Right ventricle myocardium inferior (tissue), 1 donor: ENCODE measurements at regions of chr13 and their contacts with region 1.

Region 1: DNA sequence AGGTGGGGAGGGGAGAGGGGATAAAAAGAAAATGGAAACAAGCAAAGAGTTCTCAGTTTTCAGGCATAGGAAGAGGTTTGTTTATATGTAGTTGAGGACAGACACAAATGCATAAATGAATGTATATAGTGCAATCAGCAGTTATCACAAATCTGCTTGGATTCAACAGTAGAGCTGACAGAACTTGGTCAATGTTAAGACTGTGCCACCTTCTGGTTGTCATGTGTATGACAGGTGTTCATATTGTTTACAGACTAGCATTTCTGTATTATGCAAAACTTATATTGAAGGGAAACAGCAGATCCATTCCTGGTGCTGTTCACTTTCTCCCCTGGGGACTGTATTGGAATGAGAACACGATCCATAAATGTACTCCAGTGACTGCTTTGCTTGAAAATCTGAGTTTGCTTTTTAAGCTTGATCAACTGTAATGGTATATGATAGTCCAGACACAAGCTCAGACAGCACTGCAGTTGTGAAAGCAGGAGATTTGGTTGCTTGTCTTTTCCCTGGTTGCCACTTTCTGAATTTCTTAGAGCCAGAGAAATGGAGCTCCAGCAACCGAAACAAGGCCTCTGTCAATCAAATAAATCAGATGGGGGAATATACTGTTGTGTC is 319.5 kb upstream of the OBI1 start:
- DNase-seq: no peak
- ATAC-seq: no peak

Region 2: GRCh38 chr13:78137404-78138142 is 840.9 kb before region 1 on chr13:
- intact Hi-C with region 1: loop called (anchors 5 kb)
- DNase-seq: no peak
- ATAC-seq: peak; percentile 76

Region 3: GRCh38 chr13:78241278-78241919 is 737.1 kb before region 1 on chr13:
- intact Hi-C with region 1: loop called (anchors 5 kb)
- DNase-seq: peak; percentile 40
- ATAC-seq: no peak

Region 4: DNA sequence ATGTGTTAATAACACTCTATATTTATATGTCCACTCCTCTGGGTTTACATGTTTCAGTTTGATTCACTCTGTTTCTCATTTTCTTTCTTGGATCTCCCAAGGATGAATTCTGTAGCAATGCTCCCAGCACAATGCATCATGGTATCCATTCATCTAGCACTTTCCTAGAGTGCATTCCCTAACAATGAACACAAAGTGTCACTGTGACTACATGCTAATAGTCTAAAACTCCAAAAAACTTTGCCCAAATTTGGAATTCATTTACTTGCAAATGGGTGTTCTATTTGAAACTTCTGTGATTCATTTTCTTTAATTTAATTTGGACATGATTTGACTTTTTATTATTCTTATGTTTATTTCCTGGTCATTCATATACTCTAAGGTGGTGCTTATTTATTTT is 661.5 kb before region 1 on chr13:
- intact Hi-C with region 1: loop called (anchors 5 kb)
- DNase-seq: no peak
- ATAC-seq: no peak

Region 5: DNA sequence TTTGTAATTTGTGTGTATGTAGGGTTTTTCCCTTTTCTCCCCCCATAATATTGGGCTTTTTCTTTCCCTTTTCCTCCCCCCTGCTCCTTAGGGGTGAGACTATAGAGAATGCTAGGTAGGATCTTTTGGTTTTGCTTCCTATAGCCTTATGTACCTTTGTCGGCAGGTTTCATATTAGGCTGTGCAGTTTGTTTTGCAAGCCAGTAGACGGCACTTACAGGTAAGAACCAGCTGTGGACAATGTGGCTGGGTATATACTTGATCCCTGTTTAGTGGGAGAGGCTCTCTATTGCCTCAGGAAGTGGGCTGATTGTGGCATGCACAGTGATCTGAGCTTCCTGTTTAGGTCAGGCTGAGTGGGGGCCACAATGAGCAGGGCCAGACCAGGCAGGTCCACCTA is 39.7 kb after region 1 on chr13:
- intact Hi-C with region 1: no loop called
- DNase-seq: no peak
- ATAC-seq: no peak

Region 6: GRCh38 chr13:79096099-79096498 is 117.6 kb after region 1 on chr13:
- intact Hi-C with region 1: no loop called
- DNase-seq: no peak
- ATAC-seq: no peak